Right ventricle myocardium superior (tissue), 1 donor: ENCODE measurements at regions of chr10 and their contacts with region 1.

Region 1: DNA sequence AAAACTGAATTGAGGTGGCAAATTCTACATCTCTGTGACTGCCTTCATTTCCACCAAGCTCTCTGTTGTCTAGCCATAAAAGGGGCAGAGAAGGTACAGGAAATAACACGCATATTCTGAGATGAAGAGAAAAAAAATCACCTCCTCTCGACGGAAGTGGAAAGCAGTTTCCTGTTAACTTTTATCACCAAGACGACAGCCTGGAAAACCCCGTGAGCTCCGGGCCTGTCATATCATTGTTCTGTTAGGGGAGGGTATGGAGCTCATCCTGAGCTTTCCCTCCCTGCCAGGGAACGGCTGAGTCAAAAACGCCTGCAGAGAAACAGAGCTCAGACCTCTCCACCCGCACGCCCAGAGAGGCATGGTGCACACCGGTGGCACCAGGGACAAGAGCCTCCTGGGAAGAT is 200.3 kb downstream of the PRPF18 start:
- DNase-seq: no peak
- ATAC-seq: no peak

Region 2: DNA sequence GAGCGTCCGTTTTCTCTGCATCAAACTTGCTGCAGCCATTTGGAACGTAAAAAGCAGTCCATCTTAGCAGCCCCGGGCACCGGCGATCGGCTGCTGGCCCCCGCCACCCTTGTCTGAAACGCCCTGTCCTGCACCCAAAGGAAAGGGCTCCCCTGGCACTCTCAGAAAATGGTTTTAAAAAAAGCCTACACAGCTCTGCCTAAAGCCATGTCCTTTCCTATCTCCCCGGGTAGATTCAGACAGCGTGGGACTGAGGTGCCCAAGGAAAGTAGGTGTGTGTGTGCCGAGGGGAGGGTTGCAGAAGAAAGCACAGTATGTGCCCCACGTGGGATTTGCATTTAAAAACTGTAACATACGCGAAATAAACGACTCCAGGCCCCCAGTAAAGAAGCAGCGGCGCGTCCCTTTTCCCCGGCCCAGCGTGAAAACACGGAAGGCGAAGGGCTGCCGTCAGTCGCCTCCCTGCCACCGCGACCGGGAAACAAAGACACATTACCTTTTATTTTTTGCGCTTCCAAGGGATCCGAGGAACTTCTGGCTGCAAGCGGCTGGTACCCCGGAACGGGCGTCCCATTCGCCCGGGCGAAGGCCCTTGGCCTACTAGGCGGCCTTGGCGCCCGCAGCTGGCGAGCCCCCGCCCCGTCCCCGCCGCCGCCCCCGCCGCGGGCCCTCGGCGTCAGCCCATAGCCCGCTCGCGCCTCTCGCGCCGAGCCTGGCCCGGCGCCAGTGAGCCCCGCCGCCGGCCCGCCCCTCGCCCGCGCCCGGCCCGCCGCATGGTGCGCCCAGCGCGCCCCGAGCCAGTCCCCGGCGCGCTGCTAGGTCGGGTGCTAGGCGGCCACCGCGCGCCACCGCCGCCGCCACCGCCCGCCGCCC is 104.3 kb after region 1 on chr10:
- intact Hi-C with region 1: loop called (anchors 5 kb)
- DNase-seq: peak; percentile 64
- ATAC-seq: peak; percentile 78

Region 3: GRCh38 chr10:13978533-13979115 is 191.6 kb after region 1 on chr10:
- intact Hi-C with region 1: no loop called
- DNase-seq: no peak
- ATAC-seq: no peak

Region 4: GRCh38 chr10:13990946-13991345 is 203.9 kb after region 1 on chr10:
- intact Hi-C with region 1: loop called (anchors 10 kb)
- DNase-seq: peak; percentile 61
- ATAC-seq: peak; percentile 57

Region 5: GRCh38 chr10:14093730-14094484 is 306.9 kb after region 1 on chr10:
- intact Hi-C with region 1: loop called (anchors 5 kb)
- DNase-seq: no peak
- ATAC-seq: peak; percentile 68